ENCODE measurements at regions of chr21 and their contacts with region 1.

Region 1: GRCh38 chr21:33324291-33325221 is at the start of gene IFNAR1:
- DNase-seq: peak; percentile 96
- H3K4me3 ChIP-seq: peak within 1 kb of the TSS; percentile 68 to 100 (median 99)
- H3K27ac ChIP-seq: peak within 1 kb of the TSS; percentile 85
- H3K4me1 ChIP-seq: peaks cover 6% of the 10 kb centered on the region
- H3K27me3 ChIP-seq: no peaks in the 10 kb centered on the region
- CTCF ChIP-seq: no peak
- total RNA-seq, gene IFNAR1: 17.2 to 26.9 TPM

Region 2: GRCh38 chr21:33266050-33266788 is 58.3 kb before region 1 on chr21 and contains the start of gene IL10RB:
- CTCF ChIA-PET with region 1: no interaction called
- dilution Hi-C with region 1: no loop called
- in situ Hi-C with region 1: no loop called
- intact Hi-C with region 1: loop called (anchors 2 kb)
- DNase-seq: peak; percentile 56
- H3K4me3 ChIP-seq: peak within 1 kb of the TSS; percentile 87 to 90 (median 87)
- H3K27ac ChIP-seq: peak within 1 kb of the TSS; percentile 59
- H3K4me1 ChIP-seq: peaks cover 18% of the 10 kb centered on the region
- H3K27me3 ChIP-seq: no peaks in the 10 kb centered on the region
- CTCF ChIP-seq: no peak
- total RNA-seq, gene IL10RB: 14.3 to 18.9 TPM

Region 3: DNA sequence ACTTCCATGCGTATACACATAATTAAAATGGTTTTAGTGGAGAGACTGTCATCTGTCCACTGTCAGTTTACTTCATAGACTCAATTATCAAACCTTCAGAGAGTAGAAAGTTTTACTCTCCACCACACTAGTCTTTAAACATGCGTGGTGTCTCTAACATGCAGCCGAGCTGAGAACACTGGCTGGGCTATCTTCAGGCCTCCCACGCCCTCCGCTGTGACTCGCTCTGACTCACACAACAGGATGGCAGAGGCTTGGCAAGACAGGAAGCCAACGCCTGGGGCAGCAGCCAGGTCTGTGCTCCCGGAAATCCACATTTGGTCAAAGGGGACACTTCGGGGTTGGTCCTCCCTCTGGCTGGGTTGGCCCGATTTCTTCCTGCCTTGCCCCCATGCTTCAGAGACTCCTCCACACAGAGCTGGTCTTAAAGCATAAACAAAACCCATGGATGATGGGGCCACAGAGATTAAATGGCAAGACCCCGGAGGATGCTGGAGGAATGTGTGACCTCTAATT is 56.0 kb after region 1 on chr21:
- CTCF ChIA-PET with region 1: no interaction called
- dilution Hi-C with region 1: no loop called
- in situ Hi-C with region 1: no loop called
- intact Hi-C with region 1: no loop called
- DNase-seq: peak; percentile 98
- H3K4me3 ChIP-seq: no peak overlapping the region
- H3K27ac ChIP-seq: peak overlapping the region; percentile 95
- H3K4me1 ChIP-seq: peaks cover 48% of the 10 kb centered on the region
- H3K27me3 ChIP-seq: no peaks in the 10 kb centered on the region
- CTCF ChIP-seq: no peak

Measured in mammary epithelial cell (primary cell).